Heart left ventricle (tissue), 16 donors: ENCODE measurements at regions of chr1 and their contacts with region 1.

Region 1: DNA sequence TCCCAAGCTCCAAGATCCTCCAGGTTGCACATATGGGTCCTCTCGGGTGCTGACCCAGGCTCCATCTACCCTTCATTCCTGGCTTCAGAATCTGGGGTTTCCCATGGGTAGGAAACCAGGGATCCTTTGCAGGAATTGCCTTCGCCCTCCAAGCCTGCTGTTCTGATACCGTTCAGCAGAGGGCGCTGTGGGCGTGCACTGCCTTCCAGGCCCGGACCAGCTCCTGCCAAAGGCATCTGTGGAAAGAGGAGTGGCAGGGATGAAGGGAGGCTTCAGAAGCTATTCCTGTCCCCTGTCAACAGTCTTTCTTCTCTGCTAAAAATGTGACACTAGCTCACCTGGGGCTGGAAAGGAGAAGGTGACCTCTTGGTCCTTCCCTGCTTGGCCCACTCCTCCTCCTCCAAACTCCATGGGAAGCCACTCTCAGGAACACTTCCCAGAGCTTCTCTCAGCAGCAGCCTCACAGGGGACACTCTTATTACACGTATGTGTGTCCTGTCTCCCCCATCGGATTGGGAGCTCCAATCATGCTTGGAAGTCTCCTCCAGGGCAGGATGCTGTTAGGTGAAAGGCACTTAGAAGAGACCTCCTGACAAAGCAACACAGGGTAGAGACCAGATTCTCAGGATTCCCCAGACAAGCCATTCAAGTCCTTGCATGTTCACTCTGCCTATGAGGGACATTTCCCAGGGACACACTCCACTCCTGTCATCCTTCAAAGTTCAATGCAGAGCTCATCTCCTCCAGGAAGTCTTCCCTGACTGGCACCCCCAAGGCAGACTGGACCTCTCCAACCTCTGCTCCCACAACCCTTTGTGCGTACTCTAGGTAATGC is 71.3 kb downstream of the VWA5B1 start:
- DNase-seq: peak; percentile 52 to 83 (median 65)
- ATAC-seq: peak in 3 of 4 donors; percentile 27 to 40 (median 38)
- H3K4me3 ChIP-seq: no peak overlapping the region
- H3K27ac ChIP-seq: no peak overlapping the region
- H3K4me1 ChIP-seq: peaks cover 0 to 40% (median 13%) of the 10 kb centered on the region in 12 donors
- H3K27me3 ChIP-seq: peaks cover 6 to 49% (median 19%) of the 10 kb centered on the region in 9 donors
- CTCF ChIP-seq: peak; percentile 62 to 81 (median 72)
- POLR2A ChIP-seq: no peak

Region 2: DNA sequence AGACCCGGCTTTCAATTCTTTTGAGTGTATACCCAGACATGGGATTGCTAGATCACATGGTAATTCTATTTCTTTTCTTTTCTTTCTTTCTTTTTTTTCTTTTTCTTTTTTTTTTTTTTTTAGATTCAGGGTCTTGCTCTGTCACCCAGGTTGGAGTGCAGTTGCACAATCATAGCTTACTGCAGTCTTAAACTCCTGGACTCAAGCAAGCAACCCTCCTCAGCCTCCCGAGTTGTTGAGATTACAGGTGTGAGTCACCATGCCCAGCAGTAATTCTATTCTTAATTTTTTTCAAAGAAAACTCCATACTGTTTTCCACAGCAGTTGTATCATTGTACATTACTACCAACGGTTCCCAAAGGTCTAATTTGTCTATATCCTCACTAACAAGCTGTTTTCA is 533.5 kb before region 1 on chr1:
- intact Hi-C with region 1: no loop called
- DNase-seq: no peak
- ATAC-seq: no peak
- H3K4me3 ChIP-seq: no peak overlapping the region
- H3K27ac ChIP-seq: no peak overlapping the region
- H3K4me1 ChIP-seq: no peaks in the 10 kb centered on the region
- H3K27me3 ChIP-seq: peaks cover 0 to 35% (median 0%) of the 10 kb centered on the region in 9 donors
- CTCF ChIP-seq: no peak
- POLR2A ChIP-seq: no peak

Region 3: DNA sequence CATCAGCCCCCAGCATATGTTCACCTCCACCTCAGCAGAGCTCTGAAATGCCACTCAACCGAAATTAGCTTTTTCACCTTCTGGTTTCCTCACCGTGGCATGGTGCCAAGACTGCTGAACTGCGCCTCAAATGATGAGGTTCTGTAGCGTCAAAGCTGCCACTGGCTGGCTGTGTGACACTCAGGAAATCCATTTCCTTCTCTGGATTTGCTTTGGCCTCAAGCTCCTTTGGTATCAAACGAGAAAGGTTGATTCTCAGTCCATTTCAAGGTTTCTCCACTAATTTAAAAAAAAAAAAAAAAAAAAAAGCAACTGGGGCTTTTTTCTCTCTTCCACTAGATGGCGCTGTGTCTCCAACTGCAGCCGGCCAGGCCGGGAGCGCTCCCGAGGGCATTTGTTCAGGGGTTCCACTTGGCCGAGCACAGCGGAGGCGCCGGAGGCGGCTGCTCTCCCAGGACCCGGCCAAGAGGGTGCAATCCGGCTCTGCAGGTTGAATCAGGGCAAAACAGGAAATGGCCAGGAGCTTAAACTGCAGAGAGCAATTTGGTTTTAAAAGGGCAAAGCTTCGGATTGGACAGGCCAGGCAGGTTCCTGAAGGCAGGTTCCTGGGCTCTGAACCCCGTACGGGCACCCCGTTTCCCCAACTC is 149.2 kb before region 1 on chr1:
- intact Hi-C with region 1: loop called in 2 of 10 experiments (anchors 10 kb)
- DNase-seq: peak; percentile 44 to 83 (median 53)
- ATAC-seq: peak in 3 of 4 donors; percentile 66 to 83 (median 68)
- H3K4me3 ChIP-seq: no peak overlapping the region
- H3K27ac ChIP-seq: no peak overlapping the region
- H3K4me1 ChIP-seq: peaks cover 0 to 12% (median 6%) of the 10 kb centered on the region in 12 donors
- H3K27me3 ChIP-seq: peaks cover 0 to 23% (median 15%) of the 10 kb centered on the region in 9 donors
- CTCF ChIP-seq: peak; percentile 72 to 86 (median 78)
- POLR2A ChIP-seq: no peak

Region 4: DNA sequence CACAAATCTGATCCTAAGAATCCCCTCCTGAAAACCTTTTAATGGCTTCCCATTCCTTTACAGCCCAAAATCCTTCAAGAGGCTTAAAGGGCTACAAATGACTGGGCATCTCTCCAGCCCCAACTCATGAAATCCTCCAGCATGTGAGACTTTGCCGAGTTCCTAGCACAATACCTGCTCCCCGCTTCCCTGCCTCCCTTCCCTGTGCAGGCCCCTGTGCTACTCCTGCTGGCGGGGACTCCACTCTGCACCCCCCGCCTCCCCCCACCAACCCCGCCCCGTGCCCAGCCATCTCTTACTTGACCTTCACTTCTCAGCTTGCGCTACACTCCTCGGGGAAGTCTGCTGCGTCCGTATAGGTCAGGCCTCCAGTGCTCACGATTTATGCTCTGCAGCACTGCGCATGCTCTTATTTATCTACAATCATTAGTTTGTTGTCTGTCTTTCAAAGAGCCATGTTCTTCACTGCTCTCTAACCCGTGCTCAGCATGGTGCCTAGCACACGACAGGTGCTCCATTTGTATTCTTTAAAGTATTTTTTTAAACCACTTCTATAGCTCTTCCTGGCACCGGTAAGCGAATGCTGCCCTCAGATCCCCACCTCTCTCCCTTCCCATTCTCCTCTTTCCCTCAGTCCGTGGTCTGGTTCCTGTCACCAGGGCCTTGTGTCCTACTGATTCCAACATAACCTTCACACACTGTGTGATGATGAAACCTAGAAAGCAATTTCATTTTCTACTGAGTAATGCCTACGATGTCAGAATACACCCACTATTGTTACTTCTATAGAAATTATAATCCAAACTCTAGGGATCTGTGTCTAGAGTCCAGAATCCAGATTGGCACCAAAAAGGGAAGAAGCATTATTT is 138.2 kb before region 1 on chr1:
- intact Hi-C with region 1: loop called in 4 of 10 experiments (anchors 10 kb)
- DNase-seq: no peak
- ATAC-seq: peak in 1 of 4 donors; percentile 45
- H3K4me3 ChIP-seq: no peak overlapping the region
- H3K27ac ChIP-seq: no peak overlapping the region
- H3K4me1 ChIP-seq: peaks cover 0 to 10% (median 0%) of the 10 kb centered on the region in 12 donors
- H3K27me3 ChIP-seq: peaks cover 0 to 40% (median 10%) of the 10 kb centered on the region in 9 donors
- CTCF ChIP-seq: no peak
- POLR2A ChIP-seq: no peak

Region 5: GRCh38 chr1:20233394-20233793 is 128.6 kb before region 1 on chr1:
- intact Hi-C with region 1: loop called in 3 of 10 experiments (anchors 10 kb)
- DNase-seq: no peak
- ATAC-seq: peak in 1 of 4 donors; percentile 62
- H3K4me3 ChIP-seq: no peak overlapping the region
- H3K27ac ChIP-seq: no peak overlapping the region
- H3K4me1 ChIP-seq: peaks cover 0 to 6% (median 0%) of the 10 kb centered on the region in 12 donors
- H3K27me3 ChIP-seq: peaks cover 0 to 43% (median 12%) of the 10 kb centered on the region in 9 donors
- CTCF ChIP-seq: peak in 9 of 12 donors; percentile 14 to 42 (median 32)
- POLR2A ChIP-seq: no peak

Region 6: GRCh38 chr1:20265250-20265649 is 96.8 kb before region 1 on chr1:
- intact Hi-C with region 1: loop called in 1 of 10 experiments (anchors 10 kb)
- DNase-seq: peak in 4 of 5 donors; percentile 35 to 82 (median 63)
- ATAC-seq: peak; percentile 93 to 97 (median 94)
- H3K4me3 ChIP-seq: no peak overlapping the region
- H3K27ac ChIP-seq: peak overlapping the region in 10 of 12 donors; percentile 9 to 81 (median 38)
- H3K4me1 ChIP-seq: peaks cover 0 to 16% (median 5%) of the 10 kb centered on the region in 12 donors
- H3K27me3 ChIP-seq: peaks cover 0 to 4% (median 0%) of the 10 kb centered on the region in 9 donors
- CTCF ChIP-seq: no peak
- POLR2A ChIP-seq: no peak

Region 7: DNA sequence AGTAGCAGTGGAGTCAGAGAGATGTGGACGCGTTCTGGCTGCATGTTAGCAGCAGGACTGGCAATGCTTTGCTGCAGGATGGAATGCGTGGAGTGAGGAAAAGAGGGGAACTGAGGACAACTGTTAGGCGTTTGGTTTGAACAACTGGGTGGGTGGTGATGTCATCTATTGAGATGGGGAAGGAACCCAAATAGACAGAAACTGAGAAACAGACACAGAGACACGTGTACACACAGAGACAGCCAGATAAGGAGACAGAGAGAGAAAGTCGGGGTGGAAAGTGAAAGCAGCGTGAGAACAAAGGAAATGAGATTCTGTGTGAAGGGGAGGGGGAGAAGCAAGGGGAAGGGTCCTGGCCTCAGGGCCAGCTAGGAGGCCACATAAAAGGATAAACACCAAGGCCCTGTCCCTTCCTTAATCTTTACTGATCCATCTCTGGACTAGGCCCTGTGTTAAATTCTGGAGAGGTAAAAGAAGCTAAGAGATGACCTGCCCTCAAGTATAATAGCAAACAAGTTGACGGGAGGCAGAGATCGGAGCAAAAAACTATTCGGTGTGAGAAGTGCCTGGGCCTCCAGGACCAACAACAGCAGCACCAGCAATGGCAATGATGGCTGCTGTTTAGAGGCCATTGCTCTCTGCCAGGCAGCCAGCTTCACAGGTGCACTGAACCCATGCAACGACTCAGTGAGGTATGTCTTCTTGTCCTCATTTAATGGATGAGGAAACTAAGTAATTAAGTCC is 39.8 kb before region 1 on chr1:
- intact Hi-C with region 1: no loop called
- DNase-seq: no peak
- ATAC-seq: peak in 1 of 4 donors; percentile 6
- H3K4me3 ChIP-seq: no peak overlapping the region
- H3K27ac ChIP-seq: no peak overlapping the region
- H3K4me1 ChIP-seq: peaks cover 0 to 26% (median 10%) of the 10 kb centered on the region in 12 donors
- H3K27me3 ChIP-seq: peaks cover 0 to 5% (median 0%) of the 10 kb centered on the region in 9 donors
- CTCF ChIP-seq: no peak
- POLR2A ChIP-seq: no peak

Region 8: GRCh38 chr1:20485527-20486456 is 123.8 kb after region 1 on chr1 and contains the start of gene CAMK2N1:
- intact Hi-C with region 1: loop called in 9 of 10 experiments (anchors 2 to 5 kb)
- DNase-seq: peak; percentile 77 to 87 (median 83)
- ATAC-seq: peak; percentile 44 to 85 (median 74)
- H3K4me3 ChIP-seq: peak within 1 kb of the TSS; percentile 52 to 70 (median 62)
- H3K27ac ChIP-seq: peak within 1 kb of the TSS; percentile 52 to 92 (median 82)
- H3K4me1 ChIP-seq: peaks cover 0 to 38% (median 16%) of the 10 kb centered on the region in 12 donors
- H3K27me3 ChIP-seq: peaks cover 14 to 70% (median 46%) of the 10 kb centered on the region in 9 donors
- CTCF ChIP-seq: no peak
- POLR2A ChIP-seq: peak in 1 of 2 donors; percentile 14
- total RNA-seq, gene CAMK2N1: 4.2 to 10.0 (median 7.3) TPM